ENCODE measurements at regions of chr14 and their contacts with region 1.

Region 1: DNA sequence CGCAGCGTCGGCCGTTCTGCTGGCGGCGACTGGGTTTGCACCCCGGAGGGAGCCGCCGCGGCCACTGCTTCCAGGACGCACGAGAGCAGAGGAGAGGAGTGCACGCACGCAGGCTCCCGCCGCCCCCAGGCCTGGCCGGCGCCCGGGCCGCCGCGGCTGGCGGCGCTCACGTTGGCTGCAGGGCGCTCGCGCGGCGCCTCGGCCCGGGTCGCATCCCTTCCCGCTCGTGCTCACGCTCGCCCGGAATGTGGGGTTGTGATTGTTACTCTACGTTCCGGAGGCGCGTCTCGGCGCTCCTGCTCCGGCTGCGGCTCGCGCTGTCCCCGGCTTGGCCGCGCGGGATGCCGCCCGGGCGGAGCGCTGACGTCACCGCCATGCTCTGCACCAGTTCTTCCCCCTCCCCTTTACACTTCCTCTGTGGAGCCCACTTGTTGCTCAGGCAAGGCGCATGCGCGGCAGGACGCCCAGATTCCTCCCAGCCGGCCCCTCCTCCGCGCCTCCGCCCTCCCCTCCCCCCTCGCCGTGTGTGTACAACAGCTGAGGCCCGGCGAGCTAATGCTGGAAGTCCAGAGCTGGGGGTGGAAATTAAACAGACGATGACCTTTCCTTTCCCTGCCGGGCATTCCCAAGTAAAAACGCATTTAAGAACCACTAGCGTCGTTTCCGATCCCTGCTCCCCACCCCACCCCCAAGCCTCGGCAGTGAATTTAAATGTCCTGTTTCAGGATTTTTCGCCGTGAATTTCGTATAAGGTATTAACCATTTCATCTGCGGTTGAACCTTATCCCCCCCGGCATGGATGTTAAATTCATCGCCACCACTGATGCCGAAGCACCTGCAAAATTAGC is at the start of gene IRF2BPL:
- DNase-seq: peak; percentile 95 to 99 (median 97)

Region 2: GRCh38 chr14:76918751-76919543 is 109.7 kb before region 1 on chr14:
- intact Hi-C with region 1: loop called (anchors 2 kb)
- DNase-seq: peak; percentile 81 to 98 (median 88)

Region 3: GRCh38 chr14:76947078-76947837 is 81.3 kb before region 1 on chr14:
- intact Hi-C with region 1: loop called (anchors 5 kb)
- DNase-seq: peak; percentile 89 to 99 (median 94)

Region 4: DNA sequence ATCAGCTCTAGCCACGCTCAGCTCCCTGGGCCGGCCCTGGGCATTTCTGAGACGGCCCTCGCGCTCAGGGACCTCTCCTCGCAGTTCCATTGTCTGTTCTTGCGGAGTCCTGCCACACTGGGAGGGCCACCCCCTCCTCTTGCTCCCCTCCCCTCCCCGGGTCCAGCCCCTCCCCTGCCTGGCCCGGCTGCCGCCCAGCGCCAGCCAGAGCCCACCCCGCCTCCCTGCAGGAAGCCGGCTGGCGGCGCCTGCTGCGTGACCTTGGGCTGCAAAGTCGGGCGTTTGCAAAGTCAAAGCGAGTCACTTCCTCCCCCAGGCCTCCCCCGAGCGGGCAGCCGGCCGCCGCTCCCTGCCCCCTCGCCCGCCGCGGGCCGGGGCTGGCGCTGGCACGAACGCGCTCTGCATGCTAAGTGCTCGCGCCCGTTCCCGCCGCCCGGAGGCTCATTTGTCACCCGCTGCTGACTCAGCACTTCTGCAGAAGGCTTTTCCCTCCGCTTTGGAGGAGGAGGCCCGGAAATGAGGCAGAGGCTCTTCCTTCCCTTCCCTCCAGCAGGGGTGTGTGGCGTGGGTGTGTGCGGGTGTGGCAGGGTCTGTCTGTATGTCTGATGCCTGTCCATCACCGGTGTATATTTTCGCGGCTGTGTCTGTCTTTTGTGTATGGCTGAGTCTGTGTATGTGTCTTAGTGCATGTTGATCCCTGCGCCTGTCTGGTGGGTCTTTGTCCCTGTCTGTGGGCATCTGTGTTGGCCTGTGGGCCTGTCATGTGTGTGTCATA is 72.1 kb before region 1 on chr14:
- intact Hi-C with region 1: loop called (anchors 2 kb)
- DNase-seq: peak; percentile 86 to 98 (median 91)

Region 5: GRCh38 chr14:77040059-77040740 is 11.6 kb after region 1 on chr14:
- intact Hi-C with region 1: loop called (anchors 1 kb)
- DNase-seq: peak; percentile 92 to 99 (median 95)